Mammary epithelial cell (primary cell): ENCODE measurements at regions of chr16 and their contacts with region 1.

Region 1: DNA sequence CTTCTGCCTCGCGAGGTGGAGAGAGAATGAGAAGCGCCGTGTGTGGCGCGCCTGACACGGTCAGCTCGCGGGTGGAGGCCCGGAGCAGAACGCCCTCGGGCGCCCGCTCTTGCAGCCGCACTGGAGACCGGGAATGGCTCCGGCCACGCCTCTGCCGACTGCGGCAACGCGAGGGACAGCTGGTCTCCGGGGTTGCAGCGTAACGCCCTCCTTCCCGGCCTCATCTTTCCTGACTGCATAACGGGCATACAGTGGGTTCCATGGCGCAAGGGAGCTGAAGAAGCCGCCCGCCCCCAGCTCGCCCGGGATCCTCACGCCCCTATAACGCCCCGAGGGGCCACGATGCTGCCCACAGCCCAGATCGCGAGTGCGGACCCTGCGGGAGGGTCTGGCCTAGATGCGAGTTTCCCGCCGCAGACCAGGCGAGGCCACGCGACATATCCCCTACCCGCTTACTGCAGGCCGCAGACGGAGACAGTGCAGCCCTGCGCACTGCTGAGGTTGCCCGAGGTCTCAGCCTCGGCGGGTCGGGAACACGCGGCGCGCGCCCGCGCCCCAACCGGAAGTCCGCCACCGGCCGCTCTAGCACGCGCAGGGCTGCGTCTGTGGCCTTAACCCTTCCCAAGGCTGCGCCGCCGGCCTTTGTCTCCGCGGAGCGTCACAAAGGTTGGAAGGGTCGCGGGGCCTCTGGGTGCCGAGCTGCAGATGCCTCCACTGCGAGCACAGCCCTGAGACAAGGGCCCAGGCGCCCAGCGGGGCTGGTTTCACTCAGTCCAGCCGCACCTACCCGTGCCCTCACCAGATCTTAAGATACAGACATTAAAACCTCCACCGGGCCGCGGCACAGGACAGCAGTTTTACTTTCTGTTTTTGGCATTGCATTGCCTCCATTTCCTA is 18.8 kb downstream of the BCL7C start:
- DNase-seq: peak; percentile 87
- H3K4me3 ChIP-seq: peak overlapping the region; percentile 75 to 95 (median 89)
- H3K27ac ChIP-seq: peak overlapping the region; percentile 68
- H3K4me1 ChIP-seq: peaks cover 17% of the 10 kb centered on the region
- H3K27me3 ChIP-seq: no peaks in the 10 kb centered on the region
- CTCF ChIP-seq: no peak

Region 2: GRCh38 chr16:30786936-30787612 is 88.0 kb before region 1 on chr16 and contains the start of gene ZNF629:
- CTCF ChIA-PET with region 1: no interaction called
- dilution Hi-C with region 1: loop called (anchors 5 kb)
- in situ Hi-C with region 1: no loop called
- intact Hi-C with region 1: loop called (anchors 1 kb)
- DNase-seq: peak; percentile 49
- H3K4me3 ChIP-seq: peak within 1 kb of the TSS; percentile 72 to 87 (median 86)
- H3K27ac ChIP-seq: peak within 1 kb of the TSS; percentile 59
- H3K4me1 ChIP-seq: peaks cover 12% of the 10 kb centered on the region
- H3K27me3 ChIP-seq: no peaks in the 10 kb centered on the region
- CTCF ChIP-seq: no peak
- total RNA-seq, gene ZNF629: 13.6 to 19.2 TPM

Region 3: DNA sequence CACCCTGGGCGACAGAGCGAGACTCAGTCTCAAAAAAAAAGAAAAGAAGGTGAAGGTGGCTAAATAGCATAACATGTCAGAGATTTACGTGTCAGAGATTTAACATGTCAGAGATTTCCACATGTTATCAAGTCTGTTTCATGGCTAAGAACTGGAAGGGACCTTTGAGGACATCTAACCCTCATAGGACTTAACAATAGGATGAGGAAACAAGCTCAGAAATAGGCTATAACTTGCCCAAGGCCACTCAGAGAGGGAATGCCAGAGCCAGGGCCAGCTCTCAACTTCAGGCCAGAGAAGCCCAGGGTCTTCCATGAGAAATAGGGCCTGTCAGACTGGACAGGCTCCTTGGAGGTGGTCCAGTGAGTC is 61.3 kb before region 1 on chr16:
- CTCF ChIA-PET with region 1: no interaction called
- dilution Hi-C with region 1: no loop called
- in situ Hi-C with region 1: no loop called
- intact Hi-C with region 1: loop called (anchors 2 kb)
- DNase-seq: no peak
- H3K4me3 ChIP-seq: peak overlapping the region; percentile 37 to 62 (median 48)
- H3K27ac ChIP-seq: peak overlapping the region; percentile 24
- H3K4me1 ChIP-seq: peaks cover 11% of the 10 kb centered on the region
- H3K27me3 ChIP-seq: no peaks in the 10 kb centered on the region
- CTCF ChIP-seq: no peak

Region 4: GRCh38 chr16:30850246-30850645 is 24.8 kb before region 1 on chr16:
- CTCF ChIA-PET with region 1: no interaction called
- dilution Hi-C with region 1: no loop called
- in situ Hi-C with region 1: no loop called
- intact Hi-C with region 1: no loop called
- DNase-seq: no peak
- H3K4me3 ChIP-seq: no peak overlapping the region
- H3K27ac ChIP-seq: no peak overlapping the region
- H3K4me1 ChIP-seq: peaks cover 20% of the 10 kb centered on the region
- H3K27me3 ChIP-seq: no peaks in the 10 kb centered on the region
- CTCF ChIP-seq: no peak

Region 5: DNA sequence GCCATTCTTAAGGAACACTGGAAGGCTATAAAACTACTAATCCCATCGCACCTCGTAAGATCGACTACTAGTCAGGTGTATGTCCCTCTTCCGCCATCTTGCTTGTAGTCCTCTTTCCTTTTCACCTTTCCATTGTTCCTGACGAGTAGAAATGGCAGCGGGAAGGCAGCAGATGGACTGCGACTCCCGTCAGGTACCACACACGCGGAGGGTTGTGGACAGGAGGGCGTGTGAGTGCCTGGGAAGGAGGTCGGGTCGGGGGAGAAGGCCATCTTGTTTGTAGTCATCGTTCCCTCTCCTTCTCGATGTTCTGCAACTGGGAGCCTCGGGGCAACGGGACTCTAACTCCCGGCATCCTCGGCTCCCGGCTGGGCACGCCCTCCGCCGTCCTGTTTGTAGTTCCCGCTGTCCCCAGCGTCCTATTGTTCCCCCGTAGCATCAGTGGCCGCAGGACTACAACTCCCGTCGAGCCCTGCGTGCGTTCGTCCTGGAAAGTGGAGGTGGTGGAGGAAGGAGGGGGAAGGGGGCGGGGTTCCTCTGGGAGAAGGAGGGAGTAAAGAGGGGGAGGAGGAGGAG is 48.0 kb after region 1 on chr16:
- CTCF ChIA-PET with region 1: no interaction called
- dilution Hi-C with region 1: no loop called
- in situ Hi-C with region 1: no loop called
- intact Hi-C with region 1: loop called (anchors 5 kb)
- DNase-seq: peak; percentile 100
- H3K4me3 ChIP-seq: peak overlapping the region; percentile 54 to 76 (median 70)
- H3K27ac ChIP-seq: peak overlapping the region; percentile 94
- H3K4me1 ChIP-seq: peaks cover 11% of the 10 kb centered on the region
- H3K27me3 ChIP-seq: no peaks in the 10 kb centered on the region
- CTCF ChIP-seq: no peak